Testis (tissue), 5 donors: ENCODE measurements at regions of chr3 and their contacts with region 1.

Region 1: GRCh38 chr3:126752303-126752842 is 48.3 kb downstream of the CHCHD6 start:
- DNase-seq: peak; percentile 86
- H3K4me3 ChIP-seq: no peak overlapping the region
- H3K27ac ChIP-seq: no peak overlapping the region
- H3K4me1 ChIP-seq: no peaks in the 10 kb centered on the region
- H3K27me3 ChIP-seq: no peaks in the 10 kb centered on the region
- CTCF ChIP-seq: peak; percentile 79 to 88 (median 81)
- POLR2A ChIP-seq: no peak

Region 2: GRCh38 chr3:126816986-126817777 is 64.8 kb after region 1 on chr3:
- intact Hi-C with region 1: no loop called
- DNase-seq: peak; percentile 25
- H3K4me3 ChIP-seq: no peak overlapping the region
- H3K27ac ChIP-seq: no peak overlapping the region
- H3K4me1 ChIP-seq: peaks cover 5% of the 10 kb centered on the region
- H3K27me3 ChIP-seq: no peaks in the 10 kb centered on the region
- CTCF ChIP-seq: no peak
- POLR2A ChIP-seq: no peak

Region 3: GRCh38 chr3:126895178-126896066 is 143.0 kb after region 1 on chr3:
- intact Hi-C with region 1: no loop called
- DNase-seq: peak; percentile 38
- H3K4me3 ChIP-seq: no peak overlapping the region
- H3K27ac ChIP-seq: peak overlapping the region in 1 of 2 donors; percentile 44
- H3K4me1 ChIP-seq: peaks cover 31% of the 10 kb centered on the region
- H3K27me3 ChIP-seq: no peaks in the 10 kb centered on the region
- CTCF ChIP-seq: no peak
- POLR2A ChIP-seq: no peak

Region 4: DNA sequence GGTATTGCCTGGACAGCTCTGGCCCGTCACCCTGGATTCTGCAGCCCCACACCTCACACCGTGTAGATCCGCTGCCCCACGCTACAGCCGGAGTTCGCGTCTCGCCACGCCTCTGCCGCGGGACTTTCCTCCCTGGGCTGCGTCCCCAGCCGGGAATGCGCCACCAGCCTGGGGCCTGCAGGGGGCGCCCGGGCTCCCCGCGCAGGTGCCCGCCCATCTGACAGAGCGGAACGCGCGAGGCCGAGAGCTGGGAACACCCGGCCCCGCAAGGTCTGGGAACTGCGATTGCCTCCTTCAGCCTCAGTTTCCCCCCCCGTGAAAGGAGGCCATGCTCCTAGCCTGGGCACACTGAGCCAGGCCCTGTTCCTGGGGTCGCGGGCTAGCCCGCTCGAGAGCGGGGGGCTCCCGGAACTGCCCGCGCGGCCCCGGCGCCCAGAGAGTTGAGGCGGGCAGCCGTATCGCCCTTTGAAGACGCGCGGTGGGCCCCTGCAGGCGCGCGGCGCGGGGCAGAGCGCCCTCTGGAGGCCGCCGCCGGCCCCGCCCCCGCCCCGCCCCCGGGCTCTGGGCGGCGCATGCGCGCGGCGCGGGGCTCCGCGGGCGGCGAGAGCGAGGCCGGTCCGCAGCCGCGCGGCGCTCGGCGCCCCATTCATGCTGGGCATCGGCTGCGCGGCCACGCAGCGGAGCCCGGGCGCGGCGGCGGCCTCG is 230.2 kb after region 1 on chr3 and contains the start of gene PLXNA1:
- intact Hi-C with region 1: loop called (anchors 5 kb)
- DNase-seq: peak; percentile 77
- H3K4me3 ChIP-seq: peak within 1 kb of the TSS; percentile 77 to 79
- H3K27ac ChIP-seq: peak within 1 kb of the TSS; percentile 39 to 66
- H3K4me1 ChIP-seq: peaks cover 20% of the 10 kb centered on the region
- H3K27me3 ChIP-seq: no peaks in the 10 kb centered on the region
- CTCF ChIP-seq: peak; percentile 85 to 87 (median 87)
- POLR2A ChIP-seq: no peak
- total RNA-seq, gene PLXNA1: 65.8 to 79.7 TPM